ENCODE measurements at regions of chr17 and their contacts with region 1.

Region 1: GRCh38 chr17:17702835-17703607 is 21.8 kb downstream of the RAI1 start:
- DNase-seq: no peak
- H3K4me3 ChIP-seq: no peak overlapping the region
- H3K27ac ChIP-seq: no peak overlapping the region
- H3K4me1 ChIP-seq: peaks cover 27 to 61% of the 10 kb centered on the region in 2 donors
- H3K27me3 ChIP-seq: no peaks in the 10 kb centered on the region
- CTCF ChIP-seq: no peak
- POLR2A ChIP-seq: no peak

Region 2: DNA sequence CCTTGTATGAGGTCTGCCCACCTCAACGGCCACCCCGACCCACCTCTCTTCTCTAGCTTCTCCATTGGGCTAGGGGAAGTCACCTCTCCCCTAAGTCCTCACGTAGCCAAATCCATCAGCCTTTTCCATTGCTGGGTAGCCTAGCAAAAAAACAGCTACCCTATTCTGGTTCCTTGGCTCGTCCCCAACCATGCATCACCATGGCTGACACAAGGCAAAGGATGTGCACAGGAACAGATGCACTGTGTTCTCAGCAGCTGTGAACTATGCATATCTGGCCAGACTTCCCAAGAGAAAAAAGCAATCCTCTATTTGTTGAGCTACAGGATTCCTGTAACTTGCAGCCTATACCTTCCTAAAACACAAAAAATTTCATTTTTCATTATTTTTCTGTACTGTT is 444.0 kb before region 1 on chr17:
- intact Hi-C with region 1: no loop called
- DNase-seq: no peak
- H3K4me3 ChIP-seq: no peak overlapping the region
- H3K27ac ChIP-seq: no peak overlapping the region
- H3K4me1 ChIP-seq: no peaks in the 10 kb centered on the region
- H3K27me3 ChIP-seq: no peaks in the 10 kb centered on the region
- CTCF ChIP-seq: no peak
- POLR2A ChIP-seq: no peak

Region 3: GRCh38 chr17:17836250-17836817 is 133.3 kb after region 1 on chr17:
- intact Hi-C with region 1: no loop called
- DNase-seq: peak; percentile 98 to 99
- H3K4me3 ChIP-seq: peak overlapping the region; percentile 56 to 90 (median 87)
- H3K27ac ChIP-seq: peak overlapping the region; percentile 99
- H3K4me1 ChIP-seq: peaks cover 66 to 71% of the 10 kb centered on the region in 2 donors
- H3K27me3 ChIP-seq: no peaks in the 10 kb centered on the region
- CTCF ChIP-seq: peak in 1 of 6 experiments; percentile 7
- POLR2A ChIP-seq: peak; percentile 97 to 100

Region 4: GRCh38 chr17:17919169-17920107 is 216.4 kb after region 1 on chr17:
- intact Hi-C with region 1: loop called (anchors 10 kb)
- DNase-seq: peak; percentile 84 to 87
- H3K4me3 ChIP-seq: no peak overlapping the region
- H3K27ac ChIP-seq: peak overlapping the region; percentile 19 to 54 (median 20)
- H3K4me1 ChIP-seq: peaks cover 48 to 63% of the 10 kb centered on the region in 2 donors
- H3K27me3 ChIP-seq: no peaks in the 10 kb centered on the region
- CTCF ChIP-seq: peak; percentile 47 to 91 (median 84)
- POLR2A ChIP-seq: no peak

Measured in thyroid gland (tissue), 4 donors.